MCF 10A (cell line): ENCODE measurements at regions of chr5 and their contacts with region 1.

Region 1: GRCh38 chr5:29218134-29218533 is 1975.4 kb upstream of the CDH6 start:
- DNase-seq: peak; percentile 22
- H3K4me3 Mint-ChIP-seq: no peak overlapping the region
- H3K27ac Mint-ChIP-seq: no peak overlapping the region
- H3K4me1 Mint-ChIP-seq: no peaks in the 10 kb centered on the region
- H3K27me3 Mint-ChIP-seq: no peaks in the 10 kb centered on the region
- CTCF ChIP-seq: no peak

Region 2: GRCh38 chr5:28903643-28904042 is 314.5 kb before region 1 on chr5:
- CTCF ChIA-PET with region 1: no interaction called
- POLR2A ChIA-PET with region 1: no interaction called
- intact Hi-C with region 1: loop called (anchors 1 kb)
- DNase-seq: no peak
- H3K4me3 Mint-ChIP-seq: no peak overlapping the region
- H3K27ac Mint-ChIP-seq: no peak overlapping the region
- H3K4me1 Mint-ChIP-seq: peaks cover 6% of the 10 kb centered on the region
- H3K27me3 Mint-ChIP-seq: no peaks in the 10 kb centered on the region
- CTCF ChIP-seq: peak; percentile 25

Region 3: DNA sequence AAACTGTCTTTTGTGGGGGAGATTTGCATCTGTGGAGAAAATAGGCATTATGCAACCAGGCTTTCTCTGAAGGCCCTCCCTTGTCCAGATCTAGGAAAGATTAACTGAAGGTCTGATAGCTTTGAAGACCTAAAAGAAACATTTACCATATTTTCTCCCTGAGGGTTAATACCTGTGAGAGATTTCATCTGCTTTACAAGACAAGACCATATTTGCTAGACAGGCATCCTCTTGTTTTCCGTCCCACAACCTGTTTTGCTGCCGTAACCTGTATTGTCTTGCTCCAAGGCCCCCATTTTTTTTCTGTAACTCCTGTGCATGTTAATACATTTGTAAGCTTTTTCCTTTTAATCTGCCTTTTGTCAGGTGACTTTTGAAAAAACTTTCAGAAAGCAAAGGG is 194.6 kb before region 1 on chr5:
- CTCF ChIA-PET with region 1: no interaction called
- POLR2A ChIA-PET with region 1: no interaction called
- intact Hi-C with region 1: loop called (anchors 10 kb)
- DNase-seq: no peak
- H3K4me3 Mint-ChIP-seq: no peak overlapping the region
- H3K27ac Mint-ChIP-seq: no peak overlapping the region
- H3K4me1 Mint-ChIP-seq: no peaks in the 10 kb centered on the region
- H3K27me3 Mint-ChIP-seq: no peaks in the 10 kb centered on the region
- CTCF ChIP-seq: no peak

Region 4: GRCh38 chr5:29169886-29170285 is 48.2 kb before region 1 on chr5:
- CTCF ChIA-PET with region 1: no interaction called
- POLR2A ChIA-PET with region 1: no interaction called
- intact Hi-C with region 1: no loop called
- DNase-seq: no peak
- H3K4me3 Mint-ChIP-seq: no peak overlapping the region
- H3K27ac Mint-ChIP-seq: no peak overlapping the region
- H3K4me1 Mint-ChIP-seq: no peaks in the 10 kb centered on the region
- H3K27me3 Mint-ChIP-seq: no peaks in the 10 kb centered on the region
- CTCF ChIP-seq: no peak

Region 5: GRCh38 chr5:29790281-29790680 is 572.1 kb after region 1 on chr5:
- CTCF ChIA-PET with region 1: no interaction called
- POLR2A ChIA-PET with region 1: no interaction called
- intact Hi-C with region 1: no loop called
- DNase-seq: no peak
- H3K4me3 Mint-ChIP-seq: no peak overlapping the region
- H3K27ac Mint-ChIP-seq: no peak overlapping the region
- H3K4me1 Mint-ChIP-seq: peaks cover 12% of the 10 kb centered on the region
- H3K27me3 Mint-ChIP-seq: no peaks in the 10 kb centered on the region
- CTCF ChIP-seq: no peak